Breast epithelium (tissue), 4 donors: ENCODE measurements at regions of chr19 and their contacts with region 1.

Region 1: DNA sequence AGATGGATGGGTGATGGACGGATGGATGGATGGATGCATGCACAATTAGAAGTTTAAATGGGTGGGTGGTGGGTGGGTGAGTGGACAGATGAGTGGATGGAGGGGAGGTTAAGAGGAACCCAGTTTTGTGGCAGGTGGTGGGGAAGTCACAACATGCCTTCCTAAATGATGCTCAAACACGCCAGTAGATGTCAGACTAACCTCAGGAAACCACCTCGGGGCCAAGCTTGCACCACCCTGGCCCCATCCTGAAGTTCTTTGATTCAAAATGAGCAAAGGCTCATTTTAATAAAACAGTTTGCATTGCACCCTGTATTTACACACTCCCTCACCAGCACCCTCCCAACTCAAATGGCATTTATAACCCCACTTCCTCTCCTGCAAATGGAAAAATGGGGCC is 91.4 kb upstream of the CACNA1A start:
- DNase-seq: peak in 1 of 2 donors; percentile 22
- H3K4me3 ChIP-seq: no peak overlapping the region
- H3K27ac ChIP-seq: no peak overlapping the region
- H3K4me1 ChIP-seq: no peaks in the 10 kb centered on the region
- H3K27me3 ChIP-seq: no peaks in the 10 kb centered on the region
- CTCF ChIP-seq: peak in 2 of 3 donors; percentile 61 to 62
- POLR2A ChIP-seq: no peak

Region 2: GRCh38 chr19:13727798-13728197 is 130.2 kb after region 1 on chr19:
- intact Hi-C with region 1: loop called (anchors 10 kb)
- DNase-seq: no peak
- H3K4me3 ChIP-seq: no peak overlapping the region
- H3K27ac ChIP-seq: no peak overlapping the region
- H3K4me1 ChIP-seq: peaks cover 6 to 7% of the 10 kb centered on the region in 2 donors
- H3K27me3 ChIP-seq: no peaks in the 10 kb centered on the region
- CTCF ChIP-seq: no peak
- POLR2A ChIP-seq: no peak